Naive thymus-derived CD4-positive, alpha-beta T cell (primary cell): ENCODE measurements at regions of chr3 and their contacts with region 1.

Region 1: GRCh38 chr3:196537319-196537984 is 22.3 kb upstream of the SMCO1 start:
- DNase-seq: peak; percentile 19 to 60 (median 43)
- ATAC-seq: peak; percentile 46
- H3K4me3 ChIP-seq: no peak overlapping the region
- H3K4me3 Mint-ChIP-seq: no peak overlapping the region
- H3K27ac ChIP-seq: no peak overlapping the region
- H3K27ac Mint-ChIP-seq: no peak overlapping the region
- H3K4me1 ChIP-seq: no peaks in the 10 kb centered on the region
- H3K4me1 Mint-ChIP-seq: peaks cover 0 to 8% (median 0%) of the 10 kb centered on the region in 7 donors
- H3K27me3 ChIP-seq: no peaks in the 10 kb centered on the region
- H3K27me3 Mint-ChIP-seq: peaks cover 0 to 14% (median 0%) of the 10 kb centered on the region in 5 donors

Region 2: GRCh38 chr3:196694202-196694638 is 156.8 kb after region 1 on chr3:
- CTCF ChIA-PET with region 1: no interaction called
- POLR2A ChIA-PET with region 1: no interaction called
- intact Hi-C with region 1: loop called in 1 of 2 experiments (anchors 1 kb)
- DNase-seq: peak in 6 of 9 donors; percentile 18 to 55 (median 46)
- ATAC-seq: peak; percentile 78
- H3K4me3 ChIP-seq: no peak overlapping the region
- H3K4me3 Mint-ChIP-seq: no peak overlapping the region
- H3K27ac ChIP-seq: no peak overlapping the region
- H3K27ac Mint-ChIP-seq: peak overlapping the region in 3 of 9 donors; percentile 33 to 84 (median 65)
- H3K4me1 ChIP-seq: peaks cover 0 to 12% of the 10 kb centered on the region in 2 donors
- H3K4me1 Mint-ChIP-seq: peaks cover 0 to 14% (median 7%) of the 10 kb centered on the region in 7 donors
- H3K27me3 ChIP-seq: no peaks in the 10 kb centered on the region
- H3K27me3 Mint-ChIP-seq: no peaks in the 10 kb centered on the region